ENCODE measurements at regions of chr6 and their contacts with region 1.

Region 1: GRCh38 chr6:53263917-53264316 is 84.8 kb downstream of the ELOVL5 start:
- DNase-seq: no peak
- ATAC-seq: no peak
- H3K4me3 ChIP-seq: no peak overlapping the region
- H3K4me3 Mint-ChIP-seq: peak overlapping the region; percentile 24
- H3K27ac ChIP-seq: peak overlapping the region in 1 of 2 donors; percentile 76
- H3K27ac Mint-ChIP-seq: peak overlapping the region; percentile 91
- H3K4me1 ChIP-seq: peaks cover 31 to 41% of the 10 kb centered on the region in 2 donors
- H3K4me1 Mint-ChIP-seq: peaks cover 64% of the 10 kb centered on the region
- H3K27me3 ChIP-seq: no peaks in the 10 kb centered on the region
- H3K27me3 Mint-ChIP-seq: no peaks in the 10 kb centered on the region
- CTCF ChIP-seq: no peak

Region 2: GRCh38 chr6:53134601-53135235 is 129.2 kb before region 1 on chr6:
- CTCF ChIA-PET with region 1: no interaction called
- POLR2A ChIA-PET with region 1: no interaction called
- intact Hi-C with region 1: no loop called
- DNase-seq: no peak
- ATAC-seq: no peak
- H3K4me3 ChIP-seq: no peak overlapping the region
- H3K4me3 Mint-ChIP-seq: no peak overlapping the region
- H3K27ac ChIP-seq: no peak overlapping the region
- H3K27ac Mint-ChIP-seq: no peak overlapping the region
- H3K4me1 ChIP-seq: no peaks in the 10 kb centered on the region
- H3K4me1 Mint-ChIP-seq: no peaks in the 10 kb centered on the region
- H3K27me3 ChIP-seq: no peaks in the 10 kb centered on the region
- H3K27me3 Mint-ChIP-seq: no peaks in the 10 kb centered on the region
- CTCF ChIP-seq: no peak

Region 3: GRCh38 chr6:53251033-53251672 is 12.8 kb before region 1 on chr6:
- CTCF ChIA-PET with region 1: no interaction called
- POLR2A ChIA-PET with region 1: no interaction called
- intact Hi-C with region 1: no loop called
- DNase-seq: no peak
- ATAC-seq: no peak
- H3K4me3 ChIP-seq: no peak overlapping the region
- H3K4me3 Mint-ChIP-seq: no peak overlapping the region
- H3K27ac ChIP-seq: peak overlapping the region; percentile 38 to 65
- H3K27ac Mint-ChIP-seq: peak overlapping the region; percentile 84
- H3K4me1 ChIP-seq: peaks cover 47 to 59% of the 10 kb centered on the region in 2 donors
- H3K4me1 Mint-ChIP-seq: peaks cover 75% of the 10 kb centered on the region
- H3K27me3 ChIP-seq: no peaks in the 10 kb centered on the region
- H3K27me3 Mint-ChIP-seq: no peaks in the 10 kb centered on the region
- CTCF ChIP-seq: no peak

Region 4: DNA sequence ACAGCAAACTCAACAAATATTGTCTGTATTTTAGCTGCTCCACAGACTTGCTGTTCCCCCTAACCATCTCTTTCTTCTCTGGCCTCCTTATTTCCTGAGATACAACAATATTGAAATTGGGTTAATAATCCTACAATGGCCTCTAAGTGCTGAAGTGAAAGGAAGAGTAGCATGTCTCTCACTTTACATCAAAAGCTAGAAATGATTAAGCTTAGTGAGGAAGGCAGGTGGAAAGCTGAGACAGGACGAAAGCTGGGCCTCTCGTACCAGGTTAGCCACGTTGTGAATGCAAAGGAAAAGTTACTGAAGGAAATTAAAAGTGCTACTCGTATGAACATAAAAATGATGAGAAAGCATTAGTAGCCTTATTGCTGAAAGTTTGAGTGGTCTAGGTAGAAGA is 21.0 kb after region 1 on chr6:
- CTCF ChIA-PET with region 1: interaction called, 5 read pairs
- POLR2A ChIA-PET with region 1: no interaction called
- intact Hi-C with region 1: loop called (anchors 2 kb)
- DNase-seq: no peak
- ATAC-seq: no peak
- H3K4me3 ChIP-seq: no peak overlapping the region
- H3K4me3 Mint-ChIP-seq: peak overlapping the region; percentile 44
- H3K27ac ChIP-seq: peak overlapping the region in 1 of 2 donors; percentile 68
- H3K27ac Mint-ChIP-seq: peak overlapping the region; percentile 67
- H3K4me1 ChIP-seq: peaks cover 77 to 80% of the 10 kb centered on the region in 2 donors
- H3K4me1 Mint-ChIP-seq: peaks cover 86% of the 10 kb centered on the region
- H3K27me3 ChIP-seq: no peaks in the 10 kb centered on the region
- H3K27me3 Mint-ChIP-seq: no peaks in the 10 kb centered on the region
- CTCF ChIP-seq: no peak

Measured in B cell (primary cell).